PC-9 (cell line): ENCODE measurements at regions of chr17 and their contacts with region 1.

Region 1: GRCh38 chr17:60947100-60947499 is 269.4 kb downstream of the BCAS3 start:
- DNase-seq: no peak
- H3K4me3 ChIP-seq: no peak overlapping the region
- H3K27ac ChIP-seq: no peak overlapping the region
- H3K4me1 ChIP-seq: no peaks in the 10 kb centered on the region
- H3K27me3 ChIP-seq: no peaks in the 10 kb centered on the region
- CTCF ChIP-seq: no peak

Region 2: DNA sequence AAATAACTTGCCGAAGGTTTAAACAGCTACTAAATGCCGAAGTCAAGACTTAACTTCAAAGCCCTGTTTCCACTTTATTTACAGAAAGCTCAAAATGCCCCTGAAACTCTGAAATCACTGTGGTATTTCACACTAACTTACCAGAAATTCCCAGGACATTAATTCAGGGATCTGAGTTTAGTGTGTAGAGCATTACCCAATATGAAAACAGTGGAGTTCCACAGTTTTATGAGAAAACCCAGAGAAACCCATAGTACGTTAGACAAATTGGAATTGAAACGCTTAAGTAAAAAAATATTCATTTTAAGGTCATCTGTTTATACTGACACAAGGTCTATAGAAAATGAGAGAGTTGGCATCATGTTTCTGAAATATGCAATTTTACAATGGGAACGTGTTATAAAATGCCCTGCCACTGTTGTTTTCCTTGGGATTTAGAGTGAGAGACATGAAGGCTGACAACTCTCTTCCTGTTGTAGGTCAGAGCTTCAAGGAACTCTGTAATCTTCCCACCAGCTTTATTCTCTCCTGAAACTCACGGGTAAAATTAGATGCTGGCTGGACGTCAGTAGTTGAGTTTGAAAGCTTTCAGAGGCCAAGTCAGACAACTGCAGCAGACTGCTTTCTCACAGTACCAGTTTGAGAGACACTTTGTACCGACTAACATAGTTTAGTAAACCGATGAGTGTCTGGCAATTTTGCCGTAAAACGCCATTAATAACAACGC is 313.1 kb after region 1 on chr17:
- CTCF ChIA-PET with region 1: interaction called, 16 read pairs
- POLR2A ChIA-PET with region 1: no interaction called
- intact Hi-C with region 1: no loop called
- DNase-seq: no peak
- H3K4me3 ChIP-seq: no peak overlapping the region
- H3K27ac ChIP-seq: no peak overlapping the region
- H3K4me1 ChIP-seq: no peaks in the 10 kb centered on the region
- H3K27me3 ChIP-seq: no peaks in the 10 kb centered on the region
- CTCF ChIP-seq: no peak